Activated B cell treated with CpG ODN at 0.5 μM for 24 hours (primary cell): ENCODE measurements at regions of chr1 and their contacts with region 1.

Region 1: GRCh38 chr1:112358798-112359408 is 37.1 kb upstream of the CTTNBP2NL start:
- DNase-seq: no peak
- ATAC-seq: peak; percentile 79
- H3K4me3 Mint-ChIP-seq: no peak overlapping the region
- H3K27ac Mint-ChIP-seq: no peak overlapping the region
- H3K4me1 Mint-ChIP-seq: no peaks in the 10 kb centered on the region
- H3K27me3 Mint-ChIP-seq: peaks cover 53% of the 10 kb centered on the region
- CTCF ChIP-seq: peak; percentile 39

Region 2: DNA sequence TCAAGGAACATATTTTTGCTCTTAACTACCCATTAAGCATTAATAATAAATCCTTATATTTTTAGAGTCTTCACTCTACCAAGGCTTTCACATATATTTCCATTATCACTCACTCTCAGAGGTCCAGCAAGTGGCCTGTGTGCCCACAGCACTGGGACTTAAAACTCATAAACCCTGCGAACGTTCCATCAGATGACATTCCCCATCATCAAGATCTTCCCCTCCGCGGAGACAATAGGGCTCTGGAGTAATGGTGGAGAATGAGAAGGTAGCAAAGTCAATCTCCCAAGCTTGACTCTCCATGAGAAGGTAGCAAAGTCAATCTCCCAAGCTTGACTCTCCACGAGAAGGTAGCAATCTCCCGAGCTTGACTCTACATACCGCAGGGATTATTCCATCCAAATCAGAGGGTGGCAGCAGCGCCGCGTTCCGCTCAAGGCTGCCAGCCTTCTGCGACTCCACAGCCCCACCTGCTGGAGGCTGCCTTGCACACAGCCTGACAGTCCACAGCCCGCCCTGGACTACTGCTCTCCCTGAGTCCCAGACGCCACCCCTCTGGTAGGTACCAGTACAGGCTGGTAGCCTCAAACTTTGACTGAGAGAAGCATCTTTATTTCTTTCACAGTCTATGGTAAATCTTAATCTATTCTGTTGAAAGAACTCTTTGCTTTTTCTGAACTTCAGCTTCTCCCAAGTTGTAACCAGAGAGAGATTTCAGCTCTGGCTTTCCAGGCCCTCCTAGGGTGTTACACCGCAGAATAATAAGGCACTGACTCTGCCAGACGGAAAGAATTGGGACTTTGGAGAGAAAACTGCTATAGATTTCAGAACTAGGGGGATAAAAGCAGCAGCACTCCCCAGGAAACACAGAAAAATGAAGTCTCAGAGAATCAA is 10.7 kb after region 1 on chr1:
- CTCF ChIA-PET with region 1: interaction called, 15 read pairs
- POLR2A ChIA-PET with region 1: no interaction called
- intact Hi-C with region 1: loop called (anchors 1 kb)
- DNase-seq: peak; percentile 72
- ATAC-seq: peak; percentile 100
- H3K4me3 Mint-ChIP-seq: no peak overlapping the region
- H3K27ac Mint-ChIP-seq: no peak overlapping the region
- H3K4me1 Mint-ChIP-seq: peaks cover 4% of the 10 kb centered on the region
- H3K27me3 Mint-ChIP-seq: peaks cover 37% of the 10 kb centered on the region
- CTCF ChIP-seq: peak; percentile 87

Region 3: DNA sequence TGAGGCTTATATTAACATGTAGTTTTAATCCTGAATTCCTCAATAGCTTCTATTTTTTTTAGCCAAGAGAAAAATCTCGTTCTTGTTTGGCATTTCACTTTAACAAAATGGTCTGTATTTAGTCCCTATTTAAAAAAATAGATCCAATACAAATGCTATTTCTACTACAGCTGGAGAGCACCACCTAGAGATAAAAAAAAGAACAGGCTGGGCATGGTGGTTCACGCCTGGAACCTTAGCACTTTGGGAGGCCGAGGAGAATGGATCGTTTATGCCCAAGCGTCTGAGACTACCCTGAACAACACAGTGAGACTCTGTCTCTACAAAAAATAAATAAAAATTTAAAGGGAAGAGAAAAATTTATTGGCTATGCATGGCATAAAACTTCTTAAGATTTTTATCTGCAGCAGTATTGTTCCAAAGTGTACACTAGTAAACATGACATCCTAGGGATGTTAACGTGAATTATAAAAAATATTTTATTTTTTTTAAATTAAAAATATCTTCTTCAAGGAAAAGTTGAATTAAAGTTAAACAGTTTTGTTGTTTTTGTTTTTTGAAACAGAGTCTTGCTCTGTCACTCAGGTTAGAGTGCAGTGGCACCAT is 255.7 kb after region 1 on chr1:
- CTCF ChIA-PET with region 1: interaction called, 9 read pairs
- POLR2A ChIA-PET with region 1: no interaction called
- intact Hi-C with region 1: loop called (anchors 1 kb)
- DNase-seq: no peak
- ATAC-seq: no peak
- H3K4me3 Mint-ChIP-seq: no peak overlapping the region
- H3K27ac Mint-ChIP-seq: no peak overlapping the region
- H3K4me1 Mint-ChIP-seq: peaks cover 13% of the 10 kb centered on the region
- H3K27me3 Mint-ChIP-seq: no peaks in the 10 kb centered on the region
- CTCF ChIP-seq: no peak

Region 4: DNA sequence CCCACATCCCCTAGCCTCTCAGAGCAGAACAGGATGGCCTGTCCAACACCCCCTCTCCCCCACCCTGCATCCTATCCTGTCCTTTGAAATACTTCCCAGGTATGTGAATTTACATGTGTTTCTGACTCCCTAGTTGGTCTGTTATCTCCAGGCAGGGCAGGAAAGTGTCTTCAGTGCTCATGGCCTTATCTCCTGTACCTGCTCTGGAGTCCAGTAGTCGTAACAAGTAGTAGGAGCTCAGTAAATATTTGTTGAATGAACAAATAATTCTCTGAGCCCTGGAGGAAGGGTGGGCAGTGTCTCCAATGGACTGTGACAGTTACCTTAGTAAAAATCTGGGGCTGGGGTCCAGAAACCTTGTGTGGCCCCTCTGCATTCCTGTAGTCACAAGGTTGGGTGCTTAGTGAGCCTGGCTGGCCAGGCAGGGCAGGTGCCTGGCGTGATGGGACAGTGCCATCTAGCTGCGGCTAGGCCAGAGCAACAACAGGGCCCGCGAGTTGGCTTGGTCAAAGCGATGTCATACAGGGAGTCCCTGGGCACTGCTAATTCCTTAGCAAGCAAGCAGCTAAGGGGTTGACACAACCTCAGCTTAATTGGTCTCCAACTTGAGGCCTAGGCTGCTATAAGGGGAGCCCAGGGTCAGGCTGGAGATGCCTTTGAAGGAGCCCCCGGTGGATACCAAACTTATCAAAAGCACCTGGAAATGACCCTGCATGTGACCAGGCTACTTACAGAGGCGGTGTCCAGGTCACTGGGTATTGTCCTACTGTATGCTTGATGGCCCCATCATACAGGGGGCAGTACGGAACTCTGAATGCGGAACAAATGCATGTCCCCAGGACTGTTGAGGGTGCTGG is 445.2 kb after region 1 on chr1:
- CTCF ChIA-PET with region 1: interaction called, 3 read pairs
- POLR2A ChIA-PET with region 1: no interaction called
- intact Hi-C with region 1: loop called (anchors 10 kb)
- DNase-seq: peak; percentile 27
- ATAC-seq: peak; percentile 82
- H3K4me3 Mint-ChIP-seq: no peak overlapping the region
- H3K27ac Mint-ChIP-seq: no peak overlapping the region
- H3K4me1 Mint-ChIP-seq: no peaks in the 10 kb centered on the region
- H3K27me3 Mint-ChIP-seq: peaks cover 3% of the 10 kb centered on the region
- CTCF ChIP-seq: no peak